ENCODE measurements at regions of chr11 and their contacts with region 1.

Region 1: DNA sequence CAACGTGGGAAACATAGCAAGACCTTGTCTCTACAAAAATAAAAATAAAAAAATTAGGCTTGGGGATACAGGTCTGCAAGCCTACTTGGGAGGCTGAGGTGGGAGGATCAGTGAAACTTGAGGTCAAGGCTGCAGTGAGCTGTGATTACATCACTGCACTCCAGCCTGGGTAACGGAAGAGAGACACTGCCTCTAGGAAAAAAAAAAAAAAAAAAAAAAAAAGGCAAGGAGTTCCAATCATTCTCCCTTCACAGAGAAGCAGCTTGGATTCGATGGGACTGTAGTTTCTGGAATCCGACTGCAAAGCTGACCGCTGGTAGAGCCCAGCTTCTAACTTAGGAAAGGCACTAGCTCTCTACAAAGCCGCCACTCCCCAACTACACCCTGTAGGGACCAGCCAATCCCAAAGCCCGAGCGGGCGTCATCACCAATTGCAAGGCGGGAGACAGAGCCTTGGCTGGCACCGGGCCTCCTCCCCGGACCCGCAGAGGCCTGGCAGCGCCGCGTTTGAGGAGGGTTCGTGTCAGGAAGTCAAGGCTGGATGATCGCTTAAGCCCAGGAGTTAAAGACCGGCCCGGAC is 699 bp upstream of the DDB2 start:
- DNase-seq: peak; percentile 79
- H3K4me3 Mint-ChIP-seq: peak overlapping the region; percentile 95
- H3K27ac Mint-ChIP-seq: peak overlapping the region; percentile 100
- H3K4me1 Mint-ChIP-seq: peaks cover 28% of the 10 kb centered on the region
- H3K27me3 Mint-ChIP-seq: no peaks in the 10 kb centered on the region

Region 2: GRCh38 chr11:46380340-46381047 is 833.6 kb before region 1 on chr11:
- intact Hi-C with region 1: no loop called
- DNase-seq: peak; percentile 55
- H3K4me3 Mint-ChIP-seq: peak overlapping the region; percentile 47
- H3K27ac Mint-ChIP-seq: peak overlapping the region; percentile 17
- H3K4me1 Mint-ChIP-seq: peaks cover 5% of the 10 kb centered on the region
- H3K27me3 Mint-ChIP-seq: peaks cover 21% of the 10 kb centered on the region

Region 3: DNA sequence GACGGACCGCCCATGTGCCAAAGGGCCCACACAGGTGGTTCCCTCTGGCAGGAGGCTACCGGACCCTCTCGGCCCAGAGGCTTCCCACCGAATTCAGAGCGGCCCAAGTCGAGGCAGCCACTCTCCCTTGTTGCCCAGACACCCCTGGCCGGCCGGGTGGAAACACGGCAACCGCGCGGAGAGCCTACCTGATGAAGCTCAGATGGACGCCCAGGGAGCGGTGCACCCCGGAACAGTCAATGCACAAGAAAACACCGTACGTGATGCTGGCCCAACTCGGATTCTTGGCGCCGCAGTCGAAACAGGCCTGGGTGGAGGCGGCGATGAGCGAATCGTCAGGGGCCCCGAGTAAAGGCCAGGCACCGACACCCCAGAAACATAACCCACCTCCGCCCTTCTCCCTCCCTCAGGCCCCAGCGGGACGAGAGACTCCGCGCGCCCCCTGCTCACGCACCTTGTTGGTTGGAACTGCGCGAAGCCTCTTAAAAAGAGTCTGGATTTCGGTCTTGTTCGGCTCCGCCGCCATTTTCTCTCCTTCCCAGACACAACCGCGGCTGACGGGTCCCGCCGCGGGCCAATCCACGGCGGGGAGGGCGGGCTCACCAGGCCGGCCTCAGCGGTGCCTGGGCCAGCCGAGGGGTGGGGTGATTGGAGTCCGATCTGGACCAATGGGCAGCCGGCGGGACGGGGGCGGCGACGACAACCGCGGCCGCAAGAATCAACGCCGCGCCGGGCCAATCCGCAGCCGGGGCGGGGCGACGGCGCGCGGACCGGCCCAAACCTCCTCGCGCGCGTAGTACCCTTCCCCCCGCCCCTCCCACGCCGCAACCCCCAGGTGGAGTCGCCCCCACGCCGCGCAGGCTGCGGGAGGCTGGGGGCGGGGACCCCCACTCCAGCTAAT is 37.5 kb before region 1 on chr11 and contains the start of gene ARFGAP2:
- intact Hi-C with region 1: loop called (anchors 1 kb)
- DNase-seq: peak; percentile 95
- H3K4me3 Mint-ChIP-seq: peak within 1 kb of the TSS; percentile 97
- H3K27ac Mint-ChIP-seq: peak within 1 kb of the TSS; percentile 100
- H3K4me1 Mint-ChIP-seq: peaks cover 28% of the 10 kb centered on the region
- H3K27me3 Mint-ChIP-seq: no peaks in the 10 kb centered on the region
- total RNA-seq, gene ARFGAP2: 98.6 and 104 TPM in 2 replicates

Region 4: DNA sequence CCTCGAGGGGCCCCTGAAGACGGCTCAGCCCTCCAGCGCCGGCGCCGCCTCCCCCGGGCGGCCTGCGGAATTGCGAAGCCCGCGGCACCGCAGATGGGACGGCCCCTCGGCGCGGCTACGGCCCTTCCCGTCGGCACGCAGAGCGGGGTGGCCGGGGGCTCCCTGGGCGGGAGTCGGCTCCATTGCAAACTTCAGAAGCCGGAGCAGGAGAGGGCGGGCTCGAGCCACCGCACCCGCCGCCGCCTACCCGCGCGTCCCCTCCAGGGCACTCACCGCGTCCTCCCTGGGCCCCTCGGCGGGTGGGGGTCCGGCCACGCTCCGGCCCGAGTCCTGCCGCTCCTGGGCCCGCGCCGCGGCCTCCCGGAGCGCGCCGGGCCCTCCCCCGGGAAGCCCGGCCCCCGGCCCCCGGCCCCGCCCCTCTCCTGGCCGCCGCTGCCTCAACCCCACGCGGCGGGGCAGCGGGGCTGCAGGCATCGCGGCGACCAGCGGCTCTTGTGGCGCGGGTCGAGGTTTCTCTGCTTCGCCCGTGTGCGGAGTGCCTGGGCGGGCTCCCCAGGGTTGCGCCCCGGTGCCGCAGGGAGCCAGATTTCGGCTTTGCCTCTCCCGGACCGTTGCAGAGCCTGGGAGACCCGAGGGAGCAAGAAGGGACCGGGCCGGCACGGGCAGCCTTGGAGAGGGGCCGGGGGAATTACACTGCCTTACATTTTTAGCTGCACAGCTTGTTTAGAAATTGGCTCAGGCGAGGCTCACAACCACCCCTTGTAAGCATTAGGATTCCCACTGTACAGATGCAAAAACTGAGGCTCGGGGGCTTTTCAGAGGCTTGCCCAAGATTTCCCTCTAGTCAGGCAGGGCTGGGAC is 27.8 kb before region 1 on chr11 and contains the start of gene PACSIN3:
- intact Hi-C with region 1: loop called (anchors 1 kb)
- DNase-seq: peak; percentile 22
- H3K4me3 Mint-ChIP-seq: peak within 1 kb of the TSS; percentile 73
- H3K27ac Mint-ChIP-seq: peak within 1 kb of the TSS; percentile 65
- H3K4me1 Mint-ChIP-seq: peaks cover 6% of the 10 kb centered on the region
- H3K27me3 Mint-ChIP-seq: peaks cover 35% of the 10 kb centered on the region
- total RNA-seq, gene PACSIN3: 21.4 and 22.2 TPM in 2 replicates

Region 5: GRCh38 chr11:47225552-47226400 is 11.7 kb after region 1 on chr11:
- intact Hi-C with region 1: loop called (anchors 1 kb)
- DNase-seq: peak; percentile 34
- H3K4me3 Mint-ChIP-seq: peak overlapping the region; percentile 40
- H3K27ac Mint-ChIP-seq: peak overlapping the region; percentile 84
- H3K4me1 Mint-ChIP-seq: peaks cover 33% of the 10 kb centered on the region
- H3K27me3 Mint-ChIP-seq: no peaks in the 10 kb centered on the region

Region 6: DNA sequence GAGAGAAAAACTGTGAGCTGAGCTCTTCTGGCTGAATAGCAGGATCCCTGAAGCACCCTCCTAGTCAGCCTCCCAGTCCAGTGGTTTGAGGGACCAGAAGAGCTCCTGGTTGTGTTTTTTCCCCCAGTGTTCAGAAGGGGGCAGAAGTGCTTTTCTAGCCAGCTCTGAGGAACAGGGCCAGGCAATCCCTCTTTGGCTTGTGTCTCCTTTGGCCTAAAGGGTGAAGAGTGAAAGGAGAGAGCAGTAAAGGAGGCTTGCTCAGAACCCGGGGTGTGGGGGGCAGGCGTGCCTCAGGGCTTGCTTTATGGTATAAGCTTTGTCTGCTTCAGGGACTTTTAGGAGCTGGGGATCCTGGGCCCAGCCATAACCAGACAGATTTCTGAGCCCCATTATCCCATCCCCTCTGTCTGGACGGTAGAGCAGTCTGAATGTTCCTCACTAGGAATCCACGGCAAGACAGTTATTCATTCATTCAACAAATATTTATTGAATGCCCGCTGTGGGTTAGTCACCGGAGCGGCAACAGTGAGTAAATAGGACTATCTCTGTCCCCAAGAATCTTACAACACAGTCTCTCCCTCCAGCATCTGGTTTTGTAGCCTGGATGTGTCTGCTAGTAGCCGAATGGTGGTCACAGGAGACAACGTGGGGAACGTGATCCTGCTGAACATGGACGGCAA is 20.1 kb after region 1 on chr11:
- intact Hi-C with region 1: loop called (anchors 2 kb)
- DNase-seq: no peak
- H3K4me3 Mint-ChIP-seq: no peak overlapping the region
- H3K27ac Mint-ChIP-seq: peak overlapping the region; percentile 61
- H3K4me1 Mint-ChIP-seq: peaks cover 27% of the 10 kb centered on the region
- H3K27me3 Mint-ChIP-seq: no peaks in the 10 kb centered on the region

Region 7: DNA sequence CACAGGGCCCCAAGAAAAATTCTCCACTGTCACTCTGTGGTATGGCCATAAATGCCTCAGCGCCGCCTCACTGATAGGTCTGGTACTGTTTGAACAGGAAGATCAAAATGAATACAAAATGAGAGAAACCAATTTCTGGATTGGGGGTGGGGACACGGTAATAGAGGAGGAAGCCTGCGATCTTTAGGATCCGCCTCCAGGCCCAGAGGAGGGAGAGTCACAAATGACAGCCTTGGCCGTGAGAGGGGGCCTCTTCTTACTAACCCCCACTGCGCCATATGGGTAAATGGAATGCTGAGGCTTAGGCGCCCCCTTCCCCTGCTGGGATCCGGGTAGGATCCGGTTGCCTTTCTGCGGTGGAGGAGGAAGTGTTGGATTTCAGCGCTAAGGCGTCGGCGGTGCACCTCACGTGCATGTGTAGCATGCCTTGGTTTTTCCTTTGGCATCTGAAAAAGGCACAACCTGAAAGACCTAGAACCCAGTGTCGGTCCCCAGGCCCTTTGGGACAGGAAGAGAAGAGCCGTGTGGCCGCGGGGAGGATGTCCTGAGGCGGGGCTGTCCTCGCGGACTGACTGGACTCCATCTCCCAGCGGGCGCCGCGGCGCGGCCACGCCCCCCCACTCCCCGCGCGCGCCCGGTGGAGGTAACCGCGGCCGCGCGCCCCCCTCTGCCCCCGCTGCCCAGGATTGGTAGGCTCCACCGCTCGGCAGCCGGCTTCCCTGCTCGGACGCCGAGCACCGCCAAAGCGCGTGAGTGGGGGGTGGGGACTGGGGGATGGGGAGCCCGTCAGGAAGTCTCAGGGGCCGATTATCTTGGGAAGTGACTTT is 55.1 kb after region 1 on chr11:
- intact Hi-C with region 1: loop called (anchors 1 kb)
- DNase-seq: peak; percentile 80
- H3K4me3 Mint-ChIP-seq: peak overlapping the region; percentile 84
- H3K27ac Mint-ChIP-seq: peak overlapping the region; percentile 97
- H3K4me1 Mint-ChIP-seq: peaks cover 53% of the 10 kb centered on the region
- H3K27me3 Mint-ChIP-seq: no peaks in the 10 kb centered on the region

Region 8: DNA sequence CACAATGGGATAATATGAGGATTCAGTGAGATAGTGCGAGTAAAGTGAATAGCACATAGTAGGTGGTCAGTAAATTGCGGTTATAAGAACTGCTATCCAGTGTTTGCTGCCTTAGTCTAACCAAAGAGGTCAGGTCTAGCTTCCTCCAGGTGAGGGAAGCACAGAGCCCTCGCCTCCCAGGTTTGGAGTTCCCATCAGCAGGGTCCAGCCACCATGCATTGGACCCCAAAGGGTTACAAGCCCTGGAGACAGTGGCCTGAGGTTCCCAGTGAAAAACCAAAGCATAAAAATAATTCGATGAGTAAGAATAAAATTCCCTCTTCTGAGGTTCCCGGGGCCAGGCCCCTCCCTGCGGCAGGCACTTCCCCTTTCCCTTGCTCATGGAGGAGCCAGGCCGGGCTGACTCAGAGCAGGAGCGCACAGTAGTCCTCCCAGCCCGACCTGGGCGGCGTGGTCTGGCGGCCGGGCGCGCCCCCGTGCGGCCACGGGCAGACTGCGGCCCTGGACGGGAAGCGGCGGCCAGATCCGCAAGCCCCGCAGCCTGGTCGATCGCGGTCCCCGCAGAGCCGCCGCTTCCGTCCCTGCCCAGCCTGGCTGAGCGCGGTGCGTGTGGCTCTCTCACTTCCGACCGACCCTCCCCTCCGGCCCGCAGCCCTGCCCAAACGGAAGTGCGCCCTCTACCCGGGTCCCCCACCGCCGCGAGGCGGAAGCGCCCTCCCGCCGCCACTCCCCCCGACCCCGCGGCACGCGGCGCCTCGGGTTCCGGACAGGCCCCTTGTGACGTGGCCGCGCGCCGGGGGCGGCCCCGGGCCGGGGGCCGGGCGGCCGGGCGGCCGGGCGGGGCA is 193.9 kb after region 1 on chr11 and contains the start of gene SLC39A13:
- intact Hi-C with region 1: loop called (anchors 1 kb)
- DNase-seq: peak; percentile 93
- H3K4me3 Mint-ChIP-seq: peak within 1 kb of the TSS; percentile 96
- H3K27ac Mint-ChIP-seq: peak within 1 kb of the TSS; percentile 89
- H3K4me1 Mint-ChIP-seq: peaks cover 17% of the 10 kb centered on the region
- H3K27me3 Mint-ChIP-seq: no peaks in the 10 kb centered on the region
- total RNA-seq, gene SLC39A13: 12.5 and 15.2 TPM in 2 replicates

Measured in activated T-helper 2 cell treated with anti-CD3 and anti-CD28 coated beads, Interferon-gamma antibody, Interleukin-2, Interleukin-4, amounts not matched to agents 10 μg/mL and 5 μg/mL and 100 μg/mL, durations not matched to agents 14 hours and 24 hours and 36 hours (primary cell).